ENCODE measurements at regions of chr11 and their contacts with region 1.

Region 1: GRCh38 chr11:59787816-59788215 is 22.8 kb downstream of the MRPL16 start:
- DNase-seq: no peak
- ATAC-seq: no peak
- H3K4me3 Mint-ChIP-seq: no peak overlapping the region
- H3K27ac Mint-ChIP-seq: peak overlapping the region; percentile 43
- H3K4me1 Mint-ChIP-seq: peaks cover 53% of the 10 kb centered on the region
- H3K27me3 Mint-ChIP-seq: no peaks in the 10 kb centered on the region

Region 2: GRCh38 chr11:59767225-59767611 is 20.6 kb before region 1 on chr11:
- CTCF ChIA-PET with region 1: interaction called, 10 read pairs
- POLR2A ChIA-PET with region 1: interaction called, 9 read pairs
- DNase-seq: peak; percentile 77
- ATAC-seq: peak; percentile 83
- H3K4me3 Mint-ChIP-seq: no peak overlapping the region
- H3K27ac Mint-ChIP-seq: no peak overlapping the region
- H3K4me1 Mint-ChIP-seq: peaks cover 31% of the 10 kb centered on the region
- H3K27me3 Mint-ChIP-seq: no peaks in the 10 kb centered on the region